Colonic mucosa (tissue), 4 donors: ENCODE measurements at regions of chr22 and their contacts with region 1.

Region 1: DNA sequence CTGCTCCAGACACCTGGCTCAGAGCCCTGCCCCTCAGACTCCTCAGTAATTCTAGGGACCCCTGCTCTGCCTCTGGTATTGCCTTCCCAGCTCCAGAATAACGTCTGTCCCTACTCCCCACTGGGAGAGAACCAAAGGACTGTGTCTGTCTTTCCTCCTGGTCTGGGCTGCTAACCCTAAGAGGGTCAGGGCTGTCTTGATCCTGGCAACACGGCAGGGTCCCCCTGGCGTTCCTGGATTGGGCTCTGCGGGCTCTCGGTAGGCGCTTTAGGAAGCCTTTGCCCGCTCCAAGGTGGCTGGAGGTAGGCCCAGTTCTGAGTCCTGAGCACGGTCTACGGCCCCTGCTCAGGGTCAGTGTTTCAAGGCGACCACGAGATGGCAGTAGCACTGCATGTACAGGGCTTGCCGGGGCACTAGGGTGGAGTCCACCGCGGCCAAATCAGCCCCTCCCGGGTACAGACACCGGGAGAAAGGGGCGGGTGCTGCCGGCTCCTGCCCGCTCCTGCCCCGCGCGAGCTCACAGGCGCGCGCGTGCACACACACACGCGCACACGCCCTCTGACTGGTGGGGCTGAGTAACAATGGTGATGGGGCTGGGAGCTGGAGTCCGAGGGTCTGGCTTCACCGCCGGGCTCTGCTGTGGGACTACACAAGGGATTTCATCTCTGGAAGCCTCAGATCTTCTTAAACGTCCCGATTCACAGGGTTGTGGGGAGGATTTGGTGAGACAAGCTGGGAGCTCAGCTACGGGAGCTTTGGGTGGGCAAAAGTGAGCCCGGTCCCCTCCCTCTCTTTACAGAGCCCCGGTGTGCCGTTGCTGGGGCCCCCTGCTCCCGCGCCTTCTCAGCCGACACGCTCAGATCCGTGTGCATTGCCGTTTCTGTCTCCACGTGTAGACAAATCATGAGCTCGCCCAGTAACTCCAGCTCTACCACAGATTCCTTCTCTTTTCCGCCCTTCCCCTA is 30.1 kb upstream of the HMOX1 start:
- DNase-seq: peak; percentile 93
- H3K4me3 ChIP-seq: peak overlapping the region; percentile 42
- H3K27ac ChIP-seq: peak overlapping the region; percentile 12
- H3K4me1 ChIP-seq: no peaks in the 10 kb centered on the region
- H3K27me3 ChIP-seq: no peaks in the 10 kb centered on the region
- CTCF ChIP-seq: peak; percentile 92

Region 2: DNA sequence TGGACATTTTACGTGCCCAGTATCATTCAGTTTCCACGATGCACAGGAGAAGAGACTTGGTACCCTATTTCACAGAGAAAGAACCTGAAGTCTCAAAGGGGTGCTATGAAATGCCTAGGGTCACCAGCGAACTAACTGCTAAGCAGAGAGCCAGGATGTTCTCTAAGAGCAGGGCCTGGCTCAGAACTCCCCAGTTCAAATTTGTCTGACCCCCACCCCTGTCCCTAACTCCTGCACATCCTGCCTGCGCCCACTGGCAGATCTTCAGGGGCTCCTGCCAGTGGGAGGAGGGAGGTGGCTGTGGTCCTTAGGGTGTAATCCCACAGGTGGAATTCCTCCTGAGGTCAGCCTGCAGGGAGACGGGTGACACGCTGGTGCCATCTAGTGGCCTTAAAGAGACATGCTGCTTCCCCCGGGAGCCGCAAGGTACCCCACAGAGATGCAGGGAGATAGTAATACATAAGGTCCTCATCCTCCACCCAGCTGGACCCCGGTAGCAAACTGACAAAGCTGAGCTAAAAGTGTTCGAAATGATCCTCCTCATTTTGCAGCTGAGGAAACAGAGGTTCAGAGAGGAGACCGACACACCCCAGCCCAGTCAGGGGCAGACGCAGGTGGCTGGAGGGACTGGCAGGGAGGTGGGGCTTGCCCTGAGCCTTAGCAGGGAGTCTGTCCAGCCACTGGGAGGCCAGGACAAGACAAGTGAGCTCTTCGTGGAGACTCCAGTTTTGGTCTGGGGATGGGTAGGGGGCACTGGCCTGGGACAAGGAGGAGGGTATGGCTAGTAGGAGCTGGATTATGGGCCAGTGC is 232.2 kb after region 1 on chr22:
- intact Hi-C with region 1: loop called (anchors 5 kb)
- DNase-seq: peak; percentile 54
- H3K4me3 ChIP-seq: no peak overlapping the region
- H3K27ac ChIP-seq: no peak overlapping the region
- H3K4me1 ChIP-seq: no peaks in the 10 kb centered on the region
- H3K27me3 ChIP-seq: no peaks in the 10 kb centered on the region
- CTCF ChIP-seq: peak; percentile 87

Region 3: GRCh38 chr22:35615156-35615555 is 264.3 kb after region 1 on chr22:
- intact Hi-C with region 1: loop called (anchors 5 kb)
- DNase-seq: no peak
- H3K4me3 ChIP-seq: no peak overlapping the region
- H3K27ac ChIP-seq: no peak overlapping the region
- H3K4me1 ChIP-seq: no peaks in the 10 kb centered on the region
- H3K27me3 ChIP-seq: no peaks in the 10 kb centered on the region
- CTCF ChIP-seq: no peak